CD8-positive, alpha-beta memory T cell (primary cell): ENCODE measurements at regions of chr12 and their contacts with region 1.

Region 1: DNA sequence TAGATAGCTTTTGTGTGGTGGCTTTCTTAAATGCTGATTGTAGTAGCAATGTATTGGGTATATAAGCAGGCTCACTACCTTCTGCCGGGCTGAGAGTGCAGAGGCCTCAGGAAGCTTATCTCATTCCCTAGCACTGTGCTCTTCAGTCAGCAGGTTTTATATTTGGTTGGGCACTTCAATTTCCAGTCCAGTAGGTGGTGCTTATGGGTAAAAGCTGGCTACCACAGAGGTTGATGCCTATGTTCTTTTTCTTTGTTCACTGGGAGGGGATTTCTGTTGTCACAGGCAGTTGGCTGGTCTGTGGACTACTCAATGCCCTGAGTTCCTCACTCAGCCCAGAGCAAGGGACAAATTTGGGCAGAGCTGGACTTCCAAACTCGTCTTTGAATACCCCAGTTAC is 43.0 kb upstream of the GLIPR1 start:
- DNase-seq: peak in 1 of 5 donors; percentile 33
- H3K4me3 ChIP-seq: no peak overlapping the region
- H3K4me3 Mint-ChIP-seq: no peak overlapping the region
- H3K27ac ChIP-seq: no peak overlapping the region
- H3K27ac Mint-ChIP-seq: peak overlapping the region in 1 of 8 donors; percentile 10
- H3K4me1 ChIP-seq: peaks cover 8% of the 10 kb centered on the region
- H3K4me1 Mint-ChIP-seq: peaks cover 4 to 15% (median 10%) of the 10 kb centered on the region in 3 donors
- H3K27me3 ChIP-seq: no peaks in the 10 kb centered on the region
- H3K27me3 Mint-ChIP-seq: peaks cover 0 to 4% of the 10 kb centered on the region in 2 donors

Region 2: DNA sequence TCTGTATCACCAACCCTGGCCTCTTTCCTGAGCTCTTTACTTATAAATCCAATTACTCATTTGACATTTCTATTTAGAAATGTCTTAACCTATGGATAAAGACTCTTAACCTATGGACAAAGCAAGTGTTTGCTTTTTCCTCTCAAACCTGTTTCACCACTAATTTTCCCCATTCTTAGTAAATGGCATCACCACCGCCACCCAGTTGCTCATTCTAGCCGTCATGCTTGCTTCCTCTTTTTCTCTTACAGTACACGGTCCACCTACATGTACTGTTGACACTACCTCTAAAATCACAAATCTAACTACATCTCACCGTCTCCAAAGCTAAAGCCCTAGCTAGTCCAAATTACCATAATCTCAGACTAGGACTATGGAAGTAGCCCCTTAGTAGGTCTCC is 167.4 kb before region 1 on chr12:
- CTCF ChIA-PET with region 1: no interaction called
- POLR2A ChIA-PET with region 1: no interaction called
- DNase-seq: no peak
- H3K4me3 ChIP-seq: no peak overlapping the region
- H3K4me3 Mint-ChIP-seq: no peak overlapping the region
- H3K27ac ChIP-seq: no peak overlapping the region
- H3K27ac Mint-ChIP-seq: no peak overlapping the region
- H3K4me1 ChIP-seq: no peaks in the 10 kb centered on the region
- H3K4me1 Mint-ChIP-seq: no peaks in the 10 kb centered on the region
- H3K27me3 ChIP-seq: no peaks in the 10 kb centered on the region
- H3K27me3 Mint-ChIP-seq: peaks cover 4% of the 10 kb centered on the region in 2 donors

Region 3: GRCh38 chr12:75322464-75322863 is 115.1 kb before region 1 on chr12:
- CTCF ChIA-PET with region 1: no interaction called
- POLR2A ChIA-PET with region 1: no interaction called
- DNase-seq: no peak
- H3K4me3 ChIP-seq: no peak overlapping the region
- H3K4me3 Mint-ChIP-seq: no peak overlapping the region
- H3K27ac ChIP-seq: no peak overlapping the region
- H3K27ac Mint-ChIP-seq: no peak overlapping the region
- H3K4me1 ChIP-seq: no peaks in the 10 kb centered on the region
- H3K4me1 Mint-ChIP-seq: no peaks in the 10 kb centered on the region
- H3K27me3 ChIP-seq: no peaks in the 10 kb centered on the region
- H3K27me3 Mint-ChIP-seq: peaks cover 6 to 7% of the 10 kb centered on the region in 2 donors

Region 4: DNA sequence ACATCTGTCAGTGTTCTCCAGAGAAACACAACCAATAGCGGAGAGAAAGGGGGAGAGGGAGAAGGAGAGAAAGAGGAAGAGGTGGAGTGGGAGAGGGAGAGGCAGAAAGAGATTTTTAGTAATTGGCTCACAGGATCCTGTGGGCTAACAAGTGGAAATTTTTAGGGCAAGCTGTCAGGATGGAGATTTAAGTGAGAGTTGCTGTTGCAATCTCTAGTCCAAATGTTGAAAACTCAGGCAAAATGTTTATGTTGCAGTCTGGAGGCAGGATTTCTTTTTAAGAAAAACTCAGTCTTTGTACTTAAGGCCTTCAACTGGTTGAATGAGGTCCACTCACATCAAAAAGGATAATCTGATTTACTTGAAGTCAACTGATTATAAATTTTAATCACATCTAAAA is 59.2 kb before region 1 on chr12:
- CTCF ChIA-PET with region 1: no interaction called
- POLR2A ChIA-PET with region 1: no interaction called
- DNase-seq: no peak
- H3K4me3 ChIP-seq: no peak overlapping the region
- H3K4me3 Mint-ChIP-seq: no peak overlapping the region
- H3K27ac ChIP-seq: no peak overlapping the region
- H3K27ac Mint-ChIP-seq: no peak overlapping the region
- H3K4me1 ChIP-seq: no peaks in the 10 kb centered on the region
- H3K4me1 Mint-ChIP-seq: no peaks in the 10 kb centered on the region
- H3K27me3 ChIP-seq: no peaks in the 10 kb centered on the region
- H3K27me3 Mint-ChIP-seq: peaks cover 0 to 1% of the 10 kb centered on the region in 2 donors

Region 5: GRCh38 chr12:75455831-75456230 is 18.3 kb after region 1 on chr12:
- CTCF ChIA-PET with region 1: interaction called, 11 read pairs
- POLR2A ChIA-PET with region 1: no interaction called
- DNase-seq: no peak
- H3K4me3 ChIP-seq: no peak overlapping the region
- H3K4me3 Mint-ChIP-seq: peak overlapping the region in 1 of 7 donors; percentile 1
- H3K27ac ChIP-seq: no peak overlapping the region
- H3K27ac Mint-ChIP-seq: peak overlapping the region in 1 of 8 donors; percentile 3
- H3K4me1 ChIP-seq: peaks cover 36% of the 10 kb centered on the region
- H3K4me1 Mint-ChIP-seq: peaks cover 48 to 56% (median 50%) of the 10 kb centered on the region in 3 donors
- H3K27me3 ChIP-seq: no peaks in the 10 kb centered on the region
- H3K27me3 Mint-ChIP-seq: no peaks in the 10 kb centered on the region

Region 6: GRCh38 chr12:75526655-75527511 is 89.3 kb after region 1 on chr12:
- CTCF ChIA-PET with region 1: no interaction called
- POLR2A ChIA-PET with region 1: no interaction called
- DNase-seq: no peak
- H3K4me3 ChIP-seq: no peak overlapping the region
- H3K4me3 Mint-ChIP-seq: no peak overlapping the region
- H3K27ac ChIP-seq: no peak overlapping the region
- H3K27ac Mint-ChIP-seq: no peak overlapping the region
- H3K4me1 ChIP-seq: no peaks in the 10 kb centered on the region
- H3K4me1 Mint-ChIP-seq: peaks cover 1 to 7% (median 3%) of the 10 kb centered on the region in 3 donors
- H3K27me3 ChIP-seq: no peaks in the 10 kb centered on the region
- H3K27me3 Mint-ChIP-seq: peaks cover 11 to 37% of the 10 kb centered on the region in 2 donors